GM23248 (cell line): ENCODE measurements at regions of chr12 and their contacts with region 1.

Region 1: GRCh38 chr12:108618079-108618952 is 15.4 kb downstream of the SELPLG start:
- DNase-seq: peak; percentile 90
- H3K4me3 ChIP-seq: no peak overlapping the region
- H3K27ac ChIP-seq: no peak overlapping the region
- H3K4me1 ChIP-seq: peaks cover 11% of the 10 kb centered on the region; the same call in 1 of the 2 replicates
- H3K27me3 ChIP-seq: no peaks in the 10 kb centered on the region

Region 2: DNA sequence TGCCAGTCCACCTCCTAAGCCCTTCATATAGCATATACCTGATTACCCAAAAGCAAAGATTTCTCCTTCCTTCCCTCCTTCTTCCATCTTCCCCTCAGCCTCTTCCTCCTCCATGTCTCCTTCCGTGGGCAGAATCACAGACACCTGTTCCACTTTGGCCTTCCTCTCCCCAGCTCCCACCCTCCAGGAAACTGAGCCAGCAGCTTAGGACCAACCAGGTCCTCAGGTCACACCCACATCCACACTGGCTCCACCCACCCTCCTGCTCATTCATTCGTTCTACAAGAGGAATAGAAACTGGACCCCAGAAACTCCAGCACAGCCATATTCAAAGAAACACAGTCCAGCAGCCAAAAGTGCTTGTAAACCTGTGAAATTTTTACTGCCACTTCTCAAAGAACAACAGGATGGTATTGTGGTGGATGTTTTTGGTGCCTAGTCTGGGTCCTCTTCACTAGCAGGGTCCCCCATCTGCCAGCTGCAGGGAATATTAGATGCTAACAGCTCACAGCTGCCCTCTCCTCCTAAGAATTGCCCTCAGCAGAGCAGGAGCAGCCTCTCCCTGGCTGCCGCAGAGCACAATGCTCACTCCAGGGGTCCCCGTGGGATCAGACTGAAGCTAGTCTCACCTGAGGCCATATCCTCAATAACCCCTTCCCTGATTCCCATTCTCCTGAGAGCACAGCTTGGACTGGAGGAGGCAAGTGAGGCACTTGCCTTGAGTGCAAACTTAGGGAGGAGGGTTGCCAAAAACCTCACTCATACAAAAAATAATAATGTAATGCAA is 297.6 kb before region 1 on chr12:
- in situ Hi-C with region 1: no loop called
- DNase-seq: no peak
- H3K4me3 ChIP-seq: no peak overlapping the region
- H3K27ac ChIP-seq: no peak overlapping the region
- H3K4me1 ChIP-seq: no peaks in the 10 kb centered on the region
- H3K27me3 ChIP-seq: no peaks in the 10 kb centered on the region; the same call in 1 of the 2 replicates

Region 3: DNA sequence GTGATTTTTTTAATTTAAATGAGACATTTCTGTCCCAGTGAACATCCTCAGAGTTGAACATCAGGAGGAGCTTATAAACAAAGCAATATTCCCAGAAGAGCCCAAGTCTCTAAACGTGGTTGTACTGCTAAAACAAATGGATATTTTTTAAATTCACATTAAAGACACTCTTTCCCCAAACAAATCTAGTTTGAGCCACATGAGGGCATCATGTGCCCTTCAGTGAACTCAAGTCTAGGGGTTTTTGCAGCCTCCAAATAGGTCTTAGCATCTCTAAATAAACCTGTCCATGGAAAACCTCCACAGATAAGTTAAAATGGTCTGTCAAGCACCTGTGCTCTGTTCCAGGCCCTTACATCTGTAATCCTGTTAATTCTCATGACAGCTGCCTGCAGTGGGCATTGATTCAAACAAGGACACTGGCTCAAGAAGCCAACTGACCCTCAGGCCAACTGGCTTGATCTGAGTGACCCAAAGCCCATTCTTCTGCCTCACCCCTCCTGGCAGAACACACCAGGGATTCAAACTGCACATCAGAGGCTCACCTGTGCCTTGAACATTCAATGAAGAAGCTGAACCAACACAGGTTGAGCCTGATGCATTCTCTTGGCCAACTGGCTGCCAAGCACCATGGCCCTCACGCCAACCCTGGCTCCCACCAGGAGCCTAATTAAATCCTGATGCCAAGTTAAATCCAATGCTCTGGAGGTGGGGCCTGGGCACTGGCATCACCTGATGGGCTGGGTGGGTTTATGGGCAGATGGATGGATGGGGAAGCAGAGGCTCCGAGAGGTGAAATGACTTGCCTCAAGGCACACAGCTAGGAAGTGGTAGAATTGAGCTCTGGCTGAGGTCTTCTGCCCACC is 47.3 kb before region 1 on chr12:
- in situ Hi-C with region 1: loop called (anchors 5 kb)
- DNase-seq: peak; percentile 77
- H3K4me3 ChIP-seq: no peak overlapping the region
- H3K27ac ChIP-seq: no peak overlapping the region
- H3K4me1 ChIP-seq: peaks cover 3% of the 10 kb centered on the region
- H3K27me3 ChIP-seq: no peaks in the 10 kb centered on the region

Region 4: GRCh38 chr12:108744021-108744897 is 125.9 kb after region 1 on chr12:
- in situ Hi-C with region 1: no loop called
- DNase-seq: no peak
- H3K4me3 ChIP-seq: no peak overlapping the region
- H3K27ac ChIP-seq: no peak overlapping the region
- H3K4me1 ChIP-seq: no peaks in the 10 kb centered on the region
- H3K27me3 ChIP-seq: no peaks in the 10 kb centered on the region

Region 5: GRCh38 chr12:109309381-109310246 is 691.3 kb after region 1 on chr12:
- in situ Hi-C with region 1: no loop called
- DNase-seq: peak; percentile 17
- H3K4me3 ChIP-seq: peak overlapping the region; percentile 60
- H3K27ac ChIP-seq: no peak overlapping the region
- H3K4me1 ChIP-seq: no peaks in the 10 kb centered on the region
- H3K27me3 ChIP-seq: peaks cover 62% of the 10 kb centered on the region

Region 6: DNA sequence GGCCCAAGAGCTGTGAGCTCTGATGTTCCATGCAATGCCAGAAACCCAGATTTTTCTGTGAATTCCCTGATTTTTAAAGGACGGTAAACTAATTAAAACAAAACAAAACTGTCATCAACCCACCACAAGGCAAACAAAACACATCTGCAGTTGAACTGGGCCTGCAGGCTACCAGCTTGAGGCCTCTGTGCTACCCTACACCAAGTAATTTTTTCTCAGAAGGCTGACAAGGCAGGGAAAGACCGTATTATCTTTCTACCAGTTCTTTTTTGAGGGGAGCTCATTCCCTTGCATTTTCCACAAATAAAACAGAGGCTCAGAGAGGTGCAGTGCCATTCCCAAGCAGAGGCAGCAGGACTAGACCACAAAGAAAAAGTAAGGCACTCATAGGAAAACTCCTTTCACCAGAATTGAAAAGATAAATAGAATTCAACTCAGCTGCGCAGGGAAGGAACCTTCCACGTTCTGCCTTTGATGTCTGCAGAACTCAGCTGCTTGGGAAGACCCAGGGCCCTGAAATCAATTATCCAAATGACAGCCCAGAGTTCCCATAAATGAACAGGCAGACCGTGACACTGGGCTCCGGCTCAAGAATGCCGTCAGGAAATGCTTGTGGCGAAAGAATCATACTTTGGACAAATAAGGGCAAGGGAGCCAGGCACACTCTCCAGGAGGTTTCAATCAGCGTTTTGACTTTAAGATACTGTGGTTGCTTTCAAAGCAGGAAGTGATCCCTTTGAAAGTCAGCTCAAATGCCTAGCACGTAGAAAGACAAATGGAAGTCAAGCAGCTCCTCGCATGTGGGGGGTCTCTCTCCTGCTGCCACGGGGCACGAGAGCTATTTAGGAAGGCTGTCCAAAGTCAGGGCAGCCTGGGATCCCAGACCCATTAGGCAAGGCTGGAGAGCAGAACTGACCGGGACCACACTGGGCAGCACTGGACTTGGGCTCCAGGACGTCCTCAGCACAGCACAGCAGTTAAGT is 844.7 kb after region 1 on chr12:
- in situ Hi-C with region 1: no loop called
- DNase-seq: peak; percentile 96
- H3K4me3 ChIP-seq: peak overlapping the region; percentile 61
- H3K27ac ChIP-seq: peak overlapping the region; percentile 99
- H3K4me1 ChIP-seq: peaks cover 74% of the 10 kb centered on the region
- H3K27me3 ChIP-seq: no peaks in the 10 kb centered on the region